ENCODE measurements at regions of chr4 and their contacts with region 1.

Region 1: GRCh38 chr4:103204111-103204510 is 6.0 kb upstream of the CENPE start:
- DNase-seq: no peak
- H3K4me3 ChIP-seq: no peak overlapping the region
- H3K27ac ChIP-seq: no peak overlapping the region
- H3K4me1 ChIP-seq: no peaks in the 10 kb centered on the region
- H3K27me3 ChIP-seq: no peaks in the 10 kb centered on the region
- CTCF ChIP-seq: peak in 2 of 3 experiments; percentile 39 to 47; a peak in 2 of 4 replicates
- EP300 ChIP-seq: no peak
- POLR2A ChIP-seq: no peak
- RAD21 ChIP-seq: peak; percentile 78 to 85

Region 2: DNA sequence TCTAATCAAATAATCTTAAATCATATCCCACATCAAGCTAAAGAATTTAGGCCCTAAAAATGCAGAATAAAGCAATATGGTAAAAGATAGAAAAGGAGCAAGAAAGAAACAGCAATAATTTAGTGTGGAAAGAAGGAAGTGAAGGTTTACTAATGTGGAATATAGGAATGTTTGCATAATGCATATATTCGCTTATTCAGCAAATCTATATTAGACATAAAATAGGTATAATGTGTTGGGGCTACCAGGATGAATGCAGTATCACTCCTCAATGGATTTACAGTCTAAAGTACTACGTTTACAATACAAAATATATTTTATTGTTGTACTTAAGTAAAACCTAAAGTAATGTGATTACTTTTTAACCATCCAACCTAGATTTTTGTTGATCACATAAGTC is 10.7 kb before region 1 on chr4:
- CTCF ChIA-PET with region 1: no interaction called
- POLR2A ChIA-PET with region 1: no interaction called
- DNase-seq: no peak
- H3K4me3 ChIP-seq: no peak overlapping the region
- H3K27ac ChIP-seq: no peak overlapping the region
- H3K4me1 ChIP-seq: peaks cover 0 to 1% (median 0%) of the 10 kb centered on the region in 4 experiments; a peak in 1 of 7 replicates
- H3K27me3 ChIP-seq: no peaks in the 10 kb centered on the region
- CTCF ChIP-seq: no peak
- EP300 ChIP-seq: no peak
- POLR2A ChIP-seq: no peak
- RAD21 ChIP-seq: no peak

Region 3: GRCh38 chr4:103268746-103269145 is 64.6 kb after region 1 on chr4:
- CTCF ChIA-PET with region 1: no interaction called
- POLR2A ChIA-PET with region 1: no interaction called
- DNase-seq: no peak
- H3K4me3 ChIP-seq: no peak overlapping the region
- H3K27ac ChIP-seq: no peak overlapping the region
- H3K4me1 ChIP-seq: no peaks in the 10 kb centered on the region
- H3K27me3 ChIP-seq: no peaks in the 10 kb centered on the region
- CTCF ChIP-seq: no peak
- EP300 ChIP-seq: no peak
- POLR2A ChIP-seq: no peak
- RAD21 ChIP-seq: no peak

Region 4: DNA sequence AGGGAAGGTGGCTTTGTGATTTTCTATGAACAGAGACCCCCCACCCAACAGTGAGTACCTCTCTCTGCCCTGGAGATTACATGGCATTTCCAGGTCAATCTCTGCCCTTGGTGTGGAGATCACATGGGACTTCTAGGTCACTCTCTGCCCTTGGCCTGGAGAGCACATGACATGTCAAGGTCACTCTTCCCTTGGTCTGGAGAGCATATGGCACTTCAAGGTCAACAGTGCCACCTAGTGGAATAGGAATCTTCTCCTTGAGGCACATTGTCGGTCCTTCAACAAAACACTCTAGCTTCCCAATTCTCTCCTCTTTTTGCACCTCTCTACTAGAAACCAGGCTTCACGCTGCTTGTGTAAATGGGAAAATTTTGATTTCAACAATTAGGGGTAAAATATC is 581.9 kb after region 1 on chr4:
- CTCF ChIA-PET with region 1: interaction called, 10 read pairs
- POLR2A ChIA-PET with region 1: no interaction called
- DNase-seq: no peak
- H3K4me3 ChIP-seq: no peak overlapping the region
- H3K27ac ChIP-seq: no peak overlapping the region
- H3K4me1 ChIP-seq: no peaks in the 10 kb centered on the region
- H3K27me3 ChIP-seq: no peaks in the 10 kb centered on the region
- CTCF ChIP-seq: peak; percentile 34 to 86 (median 79)
- EP300 ChIP-seq: peak in 1 of 2 experiments; percentile 12; a peak in 1 of 3 replicates
- POLR2A ChIP-seq: no peak
- RAD21 ChIP-seq: peak; percentile 94 to 97